ENCODE measurements at regions of chr1 and their contacts with region 1.

Region 1: GRCh38 chr1:109112652-109113285 is 1.1 kb upstream of the ELAPOR1 start:
- DNase-seq: peak; percentile 81
- CTCF ChIP-seq: peak; percentile 94

Region 2: GRCh38 chr1:108963052-108963686 is 149.6 kb before region 1 on chr1 and contains the start of gene CLCC1:
- CTCF ChIA-PET with region 1: interaction called, 10 read pairs
- POLR2A ChIA-PET with region 1: no interaction called
- DNase-seq: peak; percentile 96
- CTCF ChIP-seq: no peak

Region 3: GRCh38 chr1:108976658-108977057 is 136.1 kb before region 1 on chr1:
- CTCF ChIA-PET with region 1: no interaction called
- POLR2A ChIA-PET with region 1: no interaction called
- DNase-seq: no peak
- CTCF ChIP-seq: no peak

Region 4: DNA sequence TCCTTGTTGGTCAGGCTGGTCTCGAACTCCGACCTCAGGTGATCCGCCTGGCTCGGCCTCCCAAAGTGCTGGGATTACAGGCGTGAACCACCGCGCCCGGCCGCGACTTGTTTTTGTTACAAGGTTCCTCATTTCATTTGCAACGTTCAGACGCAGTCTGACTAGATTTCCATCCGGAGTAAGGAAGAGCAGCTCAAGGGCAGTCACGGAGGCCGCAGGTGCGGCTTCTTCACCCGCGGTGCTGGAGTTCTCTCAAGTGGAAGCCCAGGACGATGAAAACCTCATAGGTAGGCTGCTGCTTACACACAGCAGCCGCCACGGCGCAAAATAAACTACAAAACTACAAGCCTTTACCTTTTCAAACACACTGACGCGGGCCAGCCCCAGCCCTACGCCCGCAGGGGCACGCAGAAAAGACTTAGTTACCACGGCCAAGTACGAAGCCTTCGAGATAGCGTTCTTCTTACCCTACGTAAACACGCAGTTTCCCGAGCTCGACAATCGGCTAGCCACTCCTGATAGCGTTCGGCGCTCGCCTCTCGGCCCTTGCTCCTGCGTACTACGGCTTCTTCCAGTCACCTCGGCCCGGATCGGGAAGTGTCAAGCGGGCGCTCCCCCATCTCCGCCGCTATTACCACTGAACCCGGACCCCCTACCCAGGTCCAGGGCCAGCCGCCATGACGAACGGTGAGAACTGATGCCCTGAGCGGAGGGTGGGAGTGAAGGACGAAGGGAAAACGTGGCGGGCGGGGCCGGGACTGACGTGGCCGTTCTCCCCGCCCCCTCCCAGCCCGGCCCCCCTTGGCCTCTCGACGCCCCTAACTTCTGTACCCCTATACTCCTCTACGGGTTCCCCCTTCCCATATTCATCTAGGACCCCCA is 22.3 kb before region 1 on chr1 and contains the start of gene TMEM167B:
- CTCF ChIA-PET with region 1: interaction called, 13 read pairs
- POLR2A ChIA-PET with region 1: no interaction called
- DNase-seq: peak; percentile 89
- CTCF ChIP-seq: no peak

Region 5: DNA sequence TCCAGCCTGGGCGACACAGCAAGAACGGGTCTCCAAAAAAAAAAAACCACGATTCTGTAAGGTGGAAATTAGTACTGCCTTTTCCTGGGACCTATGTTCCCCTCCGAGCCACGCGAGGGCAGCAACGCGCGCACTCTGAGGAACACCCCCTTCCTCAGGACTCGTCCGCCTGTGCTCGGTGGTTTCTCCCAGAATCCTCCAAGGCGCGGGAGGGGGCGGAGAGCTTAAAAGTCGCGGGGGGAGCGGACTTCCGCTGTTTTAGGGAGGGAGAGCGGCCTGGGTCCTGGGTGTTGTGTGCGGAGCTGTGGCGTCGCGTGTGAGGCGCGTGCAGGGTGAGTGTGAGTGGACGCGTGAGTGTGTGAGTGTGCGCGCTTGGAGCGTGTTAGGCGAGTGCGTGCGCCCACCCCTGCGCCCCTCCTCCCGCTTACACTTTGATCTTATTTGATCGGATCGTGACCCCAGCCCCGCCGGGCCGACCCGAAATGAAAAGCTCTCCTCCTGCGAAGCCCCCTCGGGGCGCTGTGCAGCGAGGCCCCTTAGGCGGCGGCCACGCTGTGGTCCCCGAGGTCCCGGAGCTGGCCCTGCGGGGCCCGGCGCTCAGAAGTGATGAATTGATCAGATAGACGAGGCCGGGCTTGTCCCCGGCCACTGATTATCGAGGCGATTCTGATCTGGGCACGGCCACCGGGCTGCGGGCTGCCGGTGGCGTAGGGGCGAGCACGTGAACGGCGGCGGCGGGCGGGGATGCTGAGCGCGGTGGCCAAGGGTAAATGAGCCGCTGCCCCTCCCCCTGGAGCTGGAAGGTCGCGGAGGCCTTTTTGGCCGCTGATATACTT is 12.6 kb before region 1 on chr1:
- CTCF ChIA-PET with region 1: interaction called, 114 read pairs
- POLR2A ChIA-PET with region 1: interaction called, 6 read pairs
- DNase-seq: peak; percentile 96
- CTCF ChIP-seq: peak; percentile 92

Region 6: GRCh38 chr1:109131059-109131458 is 18.3 kb after region 1 on chr1:
- CTCF ChIA-PET with region 1: interaction called, 12 read pairs
- POLR2A ChIA-PET with region 1: no interaction called
- DNase-seq: no peak
- CTCF ChIP-seq: no peak

Region 7: GRCh38 chr1:109148987-109149561 is 36.3 kb after region 1 on chr1:
- CTCF ChIA-PET with region 1: interaction called, 14 read pairs
- POLR2A ChIA-PET with region 1: no interaction called
- DNase-seq: no peak
- CTCF ChIP-seq: no peak

Region 8: GRCh38 chr1:109193653-109194590 is 81.2 kb after region 1 on chr1:
- CTCF ChIA-PET with region 1: interaction called, 10 read pairs
- POLR2A ChIA-PET with region 1: no interaction called
- DNase-seq: peak; percentile 78
- CTCF ChIP-seq: peak; percentile 76

Region 9: GRCh38 chr1:109229531-109230127 is 116.9 kb after region 1 on chr1:
- CTCF ChIA-PET with region 1: no interaction called
- POLR2A ChIA-PET with region 1: no interaction called
- DNase-seq: no peak
- CTCF ChIP-seq: no peak